PC-9 (cell line): ENCODE measurements at regions of chr11 and their contacts with region 1.

Region 1: GRCh38 chr11:120400564-120401364 is 64.6 kb downstream of the ARHGEF12 start:
- DNase-seq: peak; percentile 43 to 98
- H3K4me3 ChIP-seq: peak overlapping the region; percentile 32; the same call in 1 of the 2 replicates
- H3K27ac ChIP-seq: peak overlapping the region; percentile 52
- H3K4me1 ChIP-seq: peaks cover 32% of the 10 kb centered on the region
- H3K27me3 ChIP-seq: no peaks in the 10 kb centered on the region
- CTCF ChIP-seq: no peak

Region 2: DNA sequence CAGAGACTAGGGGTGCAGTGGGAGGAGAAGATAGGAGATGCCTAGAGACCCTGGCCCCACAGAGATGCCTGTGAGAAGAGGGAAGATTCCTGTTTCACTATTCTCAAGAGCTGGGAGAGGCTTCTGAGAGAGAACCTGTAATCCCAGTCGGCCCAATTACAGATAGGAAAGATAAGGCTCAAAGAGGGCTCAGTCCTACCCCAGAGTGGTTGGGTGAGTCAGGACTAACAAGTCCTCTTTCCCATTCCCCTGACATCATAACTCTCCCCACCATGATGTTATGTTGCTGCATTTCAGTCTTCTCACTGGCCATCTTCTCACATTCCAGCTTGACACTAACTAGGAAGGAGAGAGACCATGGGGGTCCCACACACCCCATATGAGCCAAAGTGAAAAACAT is 46.7 kb before region 1 on chr11:
- CTCF ChIA-PET with region 1: no interaction called
- POLR2A ChIA-PET with region 1: no interaction called
- intact Hi-C with region 1: no loop called
- DNase-seq: no peak
- H3K4me3 ChIP-seq: no peak overlapping the region
- H3K27ac ChIP-seq: no peak overlapping the region
- H3K4me1 ChIP-seq: peaks cover 4% of the 10 kb centered on the region; the same call in 1 of the 2 replicates
- H3K27me3 ChIP-seq: no peaks in the 10 kb centered on the region
- CTCF ChIP-seq: no peak

Region 3: GRCh38 chr11:122189229-122189628 is 1788.5 kb after region 1 on chr11:
- CTCF ChIA-PET with region 1: no interaction called
- POLR2A ChIA-PET with region 1: interaction called, 21 read pairs
- intact Hi-C with region 1: no loop called
- DNase-seq: peak; percentile 25 to 90
- H3K4me3 ChIP-seq: no peak overlapping the region
- H3K27ac ChIP-seq: peak overlapping the region; percentile 87
- H3K4me1 ChIP-seq: peaks cover 49% of the 10 kb centered on the region
- H3K27me3 ChIP-seq: no peaks in the 10 kb centered on the region
- CTCF ChIP-seq: no peak